ENCODE measurements at regions of chr16 and their contacts with region 1.

Region 1: GRCh38 chr16:78122774-78123315 is 23.4 kb downstream of the WWOX start:
- DNase-seq: peak; percentile 15
- H3K4me3 ChIP-seq: no peak overlapping the region
- H3K27ac ChIP-seq: no peak overlapping the region
- H3K27me3 ChIP-seq: no peaks in the 10 kb centered on the region
- CTCF ChIP-seq: peak; percentile 46

Region 2: GRCh38 chr16:78025631-78026030 is 97.2 kb before region 1 on chr16:
- CTCF ChIA-PET with region 1: no interaction called
- POLR2A ChIA-PET with region 1: no interaction called
- DNase-seq: no peak
- H3K4me3 ChIP-seq: no peak overlapping the region
- H3K27ac ChIP-seq: no peak overlapping the region
- H3K27me3 ChIP-seq: no peaks in the 10 kb centered on the region
- CTCF ChIP-seq: no peak

Region 3: GRCh38 chr16:78060293-78060692 is 62.6 kb before region 1 on chr16:
- CTCF ChIA-PET with region 1: no interaction called
- POLR2A ChIA-PET with region 1: no interaction called
- DNase-seq: no peak
- H3K4me3 ChIP-seq: no peak overlapping the region
- H3K27ac ChIP-seq: no peak overlapping the region
- H3K27me3 ChIP-seq: no peaks in the 10 kb centered on the region
- CTCF ChIP-seq: no peak

Region 4: DNA sequence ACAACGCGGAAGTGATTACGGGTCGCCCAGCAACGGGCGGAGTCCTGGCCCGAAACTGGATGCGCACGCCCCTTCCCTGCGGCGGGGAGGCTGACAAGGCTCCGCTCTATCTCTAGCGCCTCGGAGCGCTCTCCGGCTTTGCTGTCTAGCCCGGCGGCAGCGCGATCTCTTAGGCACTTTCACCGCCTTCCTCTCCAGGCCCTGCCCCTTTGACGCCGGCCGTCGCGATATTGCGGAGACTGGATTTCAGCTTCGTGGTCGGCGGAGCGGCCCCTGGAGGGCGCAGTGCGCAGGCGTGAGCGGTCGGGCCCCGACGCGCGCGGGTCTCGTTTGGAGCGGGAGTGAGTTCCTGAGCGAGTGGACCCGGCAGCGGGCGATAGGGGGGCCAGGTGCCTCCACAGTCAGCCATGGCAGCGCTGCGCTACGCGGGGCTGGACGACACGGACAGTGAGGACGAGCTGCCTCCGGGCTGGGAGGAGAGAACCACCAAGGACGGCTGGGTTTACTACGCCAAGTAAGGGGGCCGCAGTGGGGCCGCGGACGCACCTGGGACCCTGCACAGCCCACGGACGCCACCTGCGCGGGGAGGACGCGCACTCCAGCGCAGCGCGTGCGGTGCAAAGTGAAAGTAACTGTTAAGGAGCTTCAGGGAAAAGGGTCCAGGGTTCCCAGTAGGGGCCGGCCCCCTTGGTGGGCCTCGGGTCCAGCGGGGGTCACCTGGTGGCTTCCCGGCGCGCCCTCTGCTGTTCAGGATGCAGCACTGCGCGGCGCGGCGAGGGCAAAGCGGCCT is 23.3 kb before region 1 on chr16 and contains the start of gene WWOX:
- CTCF ChIA-PET with region 1: interaction called, 11 read pairs
- POLR2A ChIA-PET with region 1: no interaction called
- DNase-seq: peak; percentile 96
- H3K4me3 ChIP-seq: peak within 1 kb of the TSS; percentile 98
- H3K27ac ChIP-seq: peak within 1 kb of the TSS; percentile 70
- H3K27me3 ChIP-seq: no peaks in the 10 kb centered on the region
- CTCF ChIP-seq: peak; percentile 82
- polyA plus RNA-seq, gene WWOX: 2.1 TPM in 2 replicates

Region 5: GRCh38 chr16:78235168-78235800 is 112.4 kb after region 1 on chr16:
- CTCF ChIA-PET with region 1: interaction called, 124 read pairs
- POLR2A ChIA-PET with region 1: no interaction called
- DNase-seq: peak; percentile 27
- H3K4me3 ChIP-seq: no peak overlapping the region
- H3K27ac ChIP-seq: no peak overlapping the region
- H3K27me3 ChIP-seq: no peaks in the 10 kb centered on the region
- CTCF ChIP-seq: peak; percentile 91

Measured in AG04450 (cell line).